GM18951 (cell line): ENCODE measurements at regions of chr7 and their contacts with region 1.

Region 1: GRCh38 chr7:106153891-106154449 is 41.9 kb upstream of the SYPL1 start:
- POLR2A ChIP-seq: no peak

Region 2: DNA sequence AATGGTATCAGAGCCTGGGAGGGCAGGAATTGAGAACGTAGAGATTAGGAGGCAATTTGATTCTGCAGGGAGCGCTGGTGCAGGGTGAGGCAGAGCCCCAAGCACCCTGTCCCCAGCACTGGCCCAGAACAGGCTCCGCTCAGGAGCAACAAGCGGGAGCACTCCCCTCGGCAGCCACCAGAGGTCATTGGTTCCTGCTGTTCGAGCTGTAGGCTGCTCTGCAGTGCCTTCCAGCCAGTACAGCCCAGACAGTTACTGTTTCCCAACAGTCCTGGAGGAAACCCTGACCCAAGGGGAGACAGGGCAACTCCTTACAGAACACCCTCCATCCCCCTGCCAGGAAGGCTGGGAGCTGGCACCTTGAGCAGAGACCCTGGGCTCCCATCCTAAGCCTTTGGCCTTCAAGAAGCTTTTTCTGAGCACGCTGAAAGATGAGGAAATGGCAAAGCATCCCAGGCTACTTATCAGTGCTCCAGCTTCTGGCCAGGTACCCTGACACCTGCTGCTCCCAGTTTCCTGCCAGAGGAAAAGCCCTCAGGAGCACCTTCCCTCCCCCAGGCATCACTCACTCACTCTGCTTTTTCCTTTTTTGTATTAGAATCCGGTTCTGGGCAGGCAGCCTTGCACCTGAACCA is 501.5 kb before region 1 on chr7:
- in situ Hi-C with region 1: loop called (anchors 25 kb)
- POLR2A ChIP-seq: no peak

Region 3: DNA sequence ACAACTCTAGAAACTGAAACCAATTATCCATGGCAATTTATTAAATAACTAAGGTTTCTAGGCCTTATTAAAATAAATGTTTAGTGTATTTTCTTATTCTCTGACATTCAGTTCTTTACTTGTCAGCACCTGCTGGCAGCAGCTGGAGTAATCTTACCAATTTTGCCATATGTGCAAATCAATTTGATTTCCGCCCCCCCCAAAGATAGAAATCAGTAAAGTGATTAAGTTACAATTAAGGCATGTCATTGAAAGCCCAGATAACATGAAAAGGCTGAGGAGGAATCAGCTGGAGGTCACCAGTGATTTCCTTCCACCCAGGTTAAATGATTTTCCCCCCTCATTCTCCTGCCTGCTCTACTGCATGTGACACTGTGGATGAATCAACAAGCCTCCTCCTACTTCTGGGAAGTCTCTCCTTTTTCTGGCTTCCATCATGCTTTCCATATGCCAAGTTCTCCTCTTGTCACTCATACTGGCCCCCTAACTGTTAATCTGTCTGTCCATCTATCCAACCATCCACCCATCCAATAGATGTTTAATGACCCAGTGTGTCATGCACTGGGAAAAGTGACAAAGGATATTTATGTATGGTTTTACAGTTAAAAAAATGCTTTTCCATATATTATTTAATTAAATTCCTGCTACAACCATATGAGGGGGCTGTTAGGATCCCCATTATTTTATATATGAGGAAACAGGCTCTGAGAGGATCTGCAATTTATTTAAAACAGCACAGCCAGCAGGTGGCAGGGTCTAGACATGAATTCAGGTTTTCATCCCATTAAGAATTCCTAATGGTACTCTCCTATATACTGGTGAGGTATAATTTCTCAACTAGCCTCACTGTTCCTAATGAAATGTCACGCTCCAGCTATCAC is 394.1 kb before region 1 on chr7:
- in situ Hi-C with region 1: loop called (anchors 25 kb)
- POLR2A ChIP-seq: no peak

Region 4: GRCh38 chr7:106056513-106057203 is 97.3 kb before region 1 on chr7:
- in situ Hi-C with region 1: loop called (anchors 5 kb)
- POLR2A ChIP-seq: no peak